ENCODE measurements at regions of chrX and their contacts with region 1.

Region 1: DNA sequence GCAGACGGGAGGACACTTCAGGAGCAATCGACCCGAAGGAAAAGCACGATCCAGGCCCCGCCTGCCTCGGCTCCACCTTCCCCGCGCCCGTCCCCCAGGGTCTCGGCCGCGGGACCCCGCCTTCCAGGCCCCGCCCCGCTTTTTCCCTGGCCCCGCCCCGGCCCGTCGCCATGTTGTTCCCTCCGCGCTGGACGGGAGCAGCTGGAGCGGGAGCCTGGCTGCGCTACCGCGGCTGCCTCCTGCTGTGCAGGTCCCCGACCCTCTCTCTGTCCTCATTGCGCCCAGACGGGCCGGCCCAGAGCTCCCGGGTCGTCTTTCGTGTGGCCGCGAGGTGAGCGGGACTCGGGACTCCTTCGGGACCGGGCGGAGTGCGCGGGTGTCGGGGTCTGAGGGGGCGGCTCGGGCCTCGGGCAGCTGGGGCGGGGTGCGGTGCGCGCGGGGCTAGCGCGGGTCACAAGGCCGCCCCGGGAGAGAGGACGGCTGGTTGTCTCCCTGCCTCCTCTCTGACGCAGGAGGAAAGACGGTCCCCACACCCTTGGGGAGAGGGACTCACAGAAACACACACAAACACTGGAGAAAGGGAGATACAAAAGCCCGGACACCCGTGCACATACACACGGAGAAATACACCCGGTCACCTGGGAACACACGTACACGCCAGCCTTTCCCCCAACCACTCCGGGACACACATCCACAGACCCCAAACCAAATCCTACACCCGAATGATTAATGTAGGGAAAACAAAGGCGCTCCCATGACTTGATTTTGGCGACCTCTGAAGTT is at the start of gene RAB9A:
- DNase-seq: peak; percentile 76 to 78
- ATAC-seq: peak; percentile 93 to 98
- H3K4me3 ChIP-seq: peak within 1 kb of the TSS; percentile 85
- H3K27ac ChIP-seq: peak within 1 kb of the TSS; percentile 93 to 99
- H3K4me1 ChIP-seq: peaks cover 59% of the 10 kb centered on the region
- CTCF ChIP-seq: no peak
- EP300 ChIP-seq: no peak
- POLR2A ChIP-seq: peak; percentile 94
- RAD21 ChIP-seq: no peak
- polyA plus RNA-seq, gene RAB9A: 26.7 and 39.0 TPM in 2 replicates

Region 2: DNA sequence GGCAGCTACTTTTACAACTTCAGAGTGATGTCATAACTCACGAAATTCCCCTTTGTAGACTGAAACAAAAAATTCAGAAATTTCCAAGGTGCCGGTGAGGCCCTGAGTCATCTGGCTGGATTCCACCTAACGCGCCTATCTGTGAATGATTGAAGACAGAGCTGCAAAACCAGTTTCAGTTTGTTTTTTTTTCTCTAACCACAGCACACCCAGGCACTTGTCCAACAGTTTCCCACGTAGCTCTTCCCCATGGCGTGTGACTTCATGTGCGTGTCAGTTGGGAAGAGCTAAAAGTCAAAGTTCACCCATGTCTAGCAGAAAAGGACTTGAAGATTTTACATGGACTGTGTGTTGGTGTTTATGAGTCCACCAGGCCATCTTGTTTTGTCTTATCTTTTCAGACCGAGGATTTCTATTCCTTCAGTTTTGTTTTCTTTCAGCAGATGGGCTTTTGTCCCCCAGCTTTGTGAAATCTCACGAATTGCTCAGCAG is 19.9 kb before region 1 on chrX:
- CTCF ChIA-PET with region 1: interaction called, 3 read pairs
- POLR2A ChIA-PET with region 1: interaction called, 11 read pairs
- DNase-seq: peak; percentile 56 to 87
- ATAC-seq: peak; percentile 87
- H3K4me3 ChIP-seq: peak overlapping the region; percentile 13; the same call in 1 of the 3 replicates
- H3K27ac ChIP-seq: peak overlapping the region; percentile 65 to 82
- H3K4me1 ChIP-seq: peaks cover 15% of the 10 kb centered on the region
- CTCF ChIP-seq: no peak
- EP300 ChIP-seq: peak in 1 of 2 experiments; percentile 75; a peak in 1 of 5 replicates
- POLR2A ChIP-seq: no peak
- RAD21 ChIP-seq: no peak

Region 3: DNA sequence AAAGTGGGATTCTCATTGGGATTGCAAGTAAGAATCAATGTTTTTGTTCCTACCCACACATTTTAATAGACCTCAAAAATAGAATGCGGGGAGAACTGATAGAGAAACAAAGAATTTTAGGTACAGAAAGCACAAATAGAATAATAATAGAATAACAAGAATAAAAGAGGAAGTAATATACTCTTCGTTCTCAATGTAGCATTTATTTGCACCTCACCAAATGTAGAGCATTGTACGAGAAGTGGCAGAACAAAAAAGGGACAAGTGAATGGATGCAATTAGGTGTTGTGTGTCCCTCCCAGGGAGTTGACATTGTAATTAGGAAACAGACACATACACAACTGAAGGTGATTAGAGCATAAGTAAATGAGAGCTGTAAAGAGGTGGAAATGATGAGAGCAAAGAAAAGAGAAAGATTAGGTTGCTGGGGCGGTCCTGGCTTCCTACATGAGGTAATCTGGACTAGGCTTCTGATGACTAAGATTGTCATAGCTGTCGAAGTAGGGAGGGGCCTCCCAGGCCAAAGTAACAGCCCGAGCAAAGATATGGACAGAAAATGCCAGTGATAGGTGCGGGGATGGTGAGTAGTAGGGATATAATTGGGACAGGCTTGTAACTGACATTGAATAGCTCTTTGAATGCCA is 10.2 kb after region 1 on chrX:
- CTCF ChIA-PET with region 1: no interaction called
- POLR2A ChIA-PET with region 1: no interaction called
- DNase-seq: no peak
- ATAC-seq: no peak
- H3K4me3 ChIP-seq: no peak overlapping the region
- H3K27ac ChIP-seq: no peak overlapping the region
- H3K4me1 ChIP-seq: peaks cover 15% of the 10 kb centered on the region
- CTCF ChIP-seq: no peak
- EP300 ChIP-seq: no peak
- POLR2A ChIP-seq: no peak
- RAD21 ChIP-seq: no peak

Region 4: GRCh38 chrX:13734278-13735172 is 45.4 kb after region 1 on chrX and contains the starts of genes OFD1 and TRAPPC2:
- CTCF ChIA-PET with region 1: interaction called, 3 read pairs
- POLR2A ChIA-PET with region 1: interaction called, 10 read pairs
- DNase-seq: peak; percentile 91 to 97
- ATAC-seq: peak; percentile 99 to 100
- H3K4me3 ChIP-seq: peak within 1 kb of the TSS; percentile 89
- H3K27ac ChIP-seq: peak within 1 kb of the TSS; percentile 92 to 93
- H3K4me1 ChIP-seq: peaks cover 18% of the 10 kb centered on the region; the same call in 2 of the 3 replicates
- CTCF ChIP-seq: no peak
- EP300 ChIP-seq: no peak
- POLR2A ChIP-seq: peak; percentile 76
- RAD21 ChIP-seq: no peak
- polyA plus RNA-seq, gene OFD1: 18.2 and 24.9 TPM in 2 replicates
- polyA plus RNA-seq, gene TRAPPC2: 11.6 and 12.2 TPM in 2 replicates

Region 5: DNA sequence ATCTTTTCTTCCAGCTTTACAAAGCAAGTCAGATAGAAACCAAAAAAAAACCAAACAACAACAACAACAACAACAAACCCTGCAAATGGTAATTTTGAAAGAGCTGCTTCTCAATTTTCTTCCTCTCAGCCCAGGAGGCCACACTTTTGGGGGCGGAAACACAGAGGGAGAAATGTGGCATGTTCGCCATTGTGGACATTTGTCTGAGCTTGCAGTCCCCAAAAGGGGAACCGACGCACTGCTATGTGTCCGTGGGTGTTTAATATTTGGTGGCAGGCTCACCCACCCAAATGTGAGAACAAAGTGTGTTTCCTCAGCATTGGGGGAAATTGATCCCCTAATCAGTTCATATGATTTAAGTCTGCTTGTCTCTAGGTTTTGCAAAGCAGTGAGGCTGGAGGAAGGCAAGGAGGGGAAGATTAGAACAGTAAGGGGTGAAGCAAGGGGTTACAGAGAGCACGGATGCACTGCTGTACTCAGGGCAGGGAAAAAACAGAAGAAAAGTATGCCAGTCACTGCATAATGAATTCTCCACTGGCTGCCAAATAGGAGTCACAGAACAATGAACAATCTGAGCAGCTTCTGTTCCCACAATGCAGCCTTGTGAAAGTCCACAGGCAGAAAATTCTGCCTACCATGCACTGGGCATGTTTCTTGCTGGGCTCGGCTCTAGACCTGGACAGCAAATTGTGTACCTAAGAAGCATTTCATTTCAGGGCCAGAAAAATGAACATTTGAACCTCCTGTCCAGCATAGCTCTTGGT is 202.4 kb after region 1 on chrX:
- CTCF ChIA-PET with region 1: no interaction called
- POLR2A ChIA-PET with region 1: no interaction called
- DNase-seq: no peak
- ATAC-seq: no peak
- H3K4me3 ChIP-seq: no peak overlapping the region
- H3K27ac ChIP-seq: no peak overlapping the region
- H3K4me1 ChIP-seq: no peaks in the 10 kb centered on the region
- CTCF ChIP-seq: no peak
- EP300 ChIP-seq: no peak
- POLR2A ChIP-seq: no peak
- RAD21 ChIP-seq: no peak

Measured in A549 (cell line).